WTC11 (cell line): ENCODE measurements at regions of chr4 and their contacts with region 1.

Region 1: GRCh38 chr4:42768125-42768748 is 111.3 kb upstream of the ATP8A1 start:
- DNase-seq: peak; percentile 61
- ATAC-seq: peak; percentile 92
- H3K4me3 Mint-ChIP-seq: no peak overlapping the region
- H3K27ac Mint-ChIP-seq: no peak overlapping the region
- H3K4me1 Mint-ChIP-seq: peaks cover 11% of the 10 kb centered on the region
- H3K27me3 Mint-ChIP-seq: no peaks in the 10 kb centered on the region
- CTCF ChIP-seq: peak; percentile 34; the same call in 1 of the 2 replicates

Region 2: DNA sequence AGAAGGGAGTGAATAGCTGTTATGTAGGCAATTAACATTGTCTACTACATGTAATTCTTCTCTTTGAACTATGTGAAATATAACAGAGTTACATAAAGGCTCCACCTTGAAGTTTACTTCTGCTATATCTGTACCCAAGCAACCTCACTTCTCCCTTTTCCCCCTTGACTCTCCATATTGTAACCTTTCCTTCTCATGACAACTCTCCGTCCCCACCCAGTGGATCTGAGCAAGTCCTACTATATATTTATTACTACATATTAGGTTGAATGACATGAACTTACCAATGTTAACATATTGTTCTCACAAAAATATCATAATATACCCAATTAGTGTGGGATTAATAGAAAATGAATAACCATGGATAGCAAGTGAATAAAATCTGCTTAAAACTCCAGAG is 18.1 kb before region 1 on chr4:
- CTCF ChIA-PET with region 1: no interaction called
- POLR2A ChIA-PET with region 1: no interaction called
- DNase-seq: no peak
- ATAC-seq: peak; percentile 56
- H3K4me3 Mint-ChIP-seq: no peak overlapping the region
- H3K27ac Mint-ChIP-seq: no peak overlapping the region
- H3K4me1 Mint-ChIP-seq: peaks cover 6% of the 10 kb centered on the region
- H3K27me3 Mint-ChIP-seq: no peaks in the 10 kb centered on the region; the same call in 1 of the 2 replicates
- CTCF ChIP-seq: no peak

Region 3: GRCh38 chr4:42786350-42787078 is 18.3 kb after region 1 on chr4:
- CTCF ChIA-PET with region 1: interaction called, 10 read pairs
- POLR2A ChIA-PET with region 1: no interaction called
- DNase-seq: peak; percentile 57
- ATAC-seq: peak; percentile 94
- H3K4me3 Mint-ChIP-seq: no peak overlapping the region
- H3K27ac Mint-ChIP-seq: peak overlapping the region; percentile 75; the same call in 1 of the 2 replicates
- H3K4me1 Mint-ChIP-seq: peaks cover 24% of the 10 kb centered on the region
- H3K27me3 Mint-ChIP-seq: no peaks in the 10 kb centered on the region; the same call in 1 of the 2 replicates
- CTCF ChIP-seq: no peak

Region 4: DNA sequence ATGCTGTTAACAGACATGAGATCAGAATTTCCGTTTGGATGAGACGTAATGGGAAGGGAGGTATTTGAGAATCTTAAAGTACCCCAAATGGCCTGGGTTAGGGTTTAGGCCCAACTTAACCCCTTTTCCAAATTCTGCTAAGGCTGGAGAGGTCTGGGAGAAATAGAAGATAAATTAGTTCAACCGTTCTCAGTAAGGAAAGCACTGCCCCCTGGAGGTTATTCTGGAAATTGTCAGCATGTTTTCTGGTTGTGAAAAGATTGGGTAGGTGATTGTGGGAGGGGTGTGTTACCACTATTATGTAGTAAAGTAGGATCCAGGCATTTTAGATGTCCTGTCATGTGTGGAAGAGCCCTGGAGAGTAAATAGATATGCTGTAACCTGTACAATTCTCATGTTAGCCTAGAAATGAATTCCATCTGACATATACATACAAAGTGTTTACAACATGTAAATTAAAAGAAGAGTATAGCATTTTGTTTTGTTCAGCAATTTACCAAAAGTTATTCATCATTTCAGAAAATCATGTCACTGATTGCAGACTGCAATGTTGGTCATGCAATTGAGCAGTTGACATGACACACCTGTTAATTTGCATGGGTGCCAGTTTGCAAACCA is 97.4 kb after region 1 on chr4:
- CTCF ChIA-PET with region 1: no interaction called
- POLR2A ChIA-PET with region 1: no interaction called
- DNase-seq: peak; percentile 55
- ATAC-seq: peak; percentile 80
- H3K4me3 Mint-ChIP-seq: no peak overlapping the region
- H3K27ac Mint-ChIP-seq: no peak overlapping the region
- H3K4me1 Mint-ChIP-seq: peaks cover 5% of the 10 kb centered on the region; the same call in 1 of the 2 replicates
- H3K27me3 Mint-ChIP-seq: no peaks in the 10 kb centered on the region
- CTCF ChIP-seq: peak; percentile 69; the same call in 1 of the 2 replicates